HepG2 (cell line): ENCODE measurements at regions of chr13 and their contacts with region 1.

Region 1: GRCh38 chr13:77477299-77477848 is 58.1 kb upstream of the SCEL start:
- DNase-seq: no peak
- ATAC-seq: no peak
- H3K4me3 ChIP-seq: no peak overlapping the region
- H3K27ac ChIP-seq: no peak overlapping the region
- H3K4me1 ChIP-seq: peaks cover 7% of the 10 kb centered on the region
- H3K27me3 ChIP-seq: no peaks in the 10 kb centered on the region; a peak in 1 of 5 replicates
- CTCF ChIP-seq: no peak
- EP300 ChIP-seq: no peak
- POLR2A ChIP-seq: no peak
- RAD21 ChIP-seq: no peak

Region 2: GRCh38 chr13:77190349-77190958 is 286.9 kb before region 1 on chr13:
- CTCF ChIA-PET with region 1: no interaction called
- POLR2A ChIA-PET with region 1: no interaction called
- in situ Hi-C with region 1: no loop called
- intact Hi-C with region 1: loop called (anchors 5 kb)
- DNase-seq: no peak
- ATAC-seq: no peak
- H3K4me3 ChIP-seq: no peak overlapping the region
- H3K27ac ChIP-seq: no peak overlapping the region
- H3K4me1 ChIP-seq: no peaks in the 10 kb centered on the region
- H3K27me3 ChIP-seq: no peaks in the 10 kb centered on the region
- CTCF ChIP-seq: no peak
- EP300 ChIP-seq: no peak
- POLR2A ChIP-seq: no peak
- RAD21 ChIP-seq: no peak

Region 3: GRCh38 chr13:77329133-77329910 is 148.1 kb before region 1 on chr13:
- CTCF ChIA-PET with region 1: no interaction called
- POLR2A ChIA-PET with region 1: no interaction called
- in situ Hi-C with region 1: no loop called
- intact Hi-C with region 1: loop called (anchors 2 kb)
- DNase-seq: peak; percentile 85
- ATAC-seq: peak; percentile 77
- H3K4me3 ChIP-seq: peak overlapping the region; percentile 62 to 78 (median 76)
- H3K27ac ChIP-seq: peak overlapping the region; percentile 56
- H3K4me1 ChIP-seq: peaks cover 33% of the 10 kb centered on the region
- H3K27me3 ChIP-seq: peaks cover 0 to 4% of the 10 kb centered on the region in 2 experiments; a peak in 1 of 5 replicates
- CTCF ChIP-seq: no peak; the same call in 1 of the 2 replicates
- EP300 ChIP-seq: no peak; a peak in 1 of 4 replicates
- POLR2A ChIP-seq: peak; percentile 55 to 77
- RAD21 ChIP-seq: no peak

Region 4: GRCh38 chr13:77437267-77437666 is 40.1 kb before region 1 on chr13:
- CTCF ChIA-PET with region 1: no interaction called
- POLR2A ChIA-PET with region 1: no interaction called
- in situ Hi-C with region 1: no loop called
- intact Hi-C with region 1: no loop called
- DNase-seq: peak; percentile 5
- ATAC-seq: peak; percentile 60; the same call in 2 of the 3 replicates
- H3K4me3 ChIP-seq: no peak overlapping the region
- H3K27ac ChIP-seq: no peak overlapping the region
- H3K4me1 ChIP-seq: no peaks in the 10 kb centered on the region
- H3K27me3 ChIP-seq: no peaks in the 10 kb centered on the region
- CTCF ChIP-seq: no peak
- EP300 ChIP-seq: no peak
- POLR2A ChIP-seq: no peak
- RAD21 ChIP-seq: no peak